Mammary epithelial cell (primary cell): ENCODE measurements at regions of chr3 and their contacts with region 1.

Region 1: DNA sequence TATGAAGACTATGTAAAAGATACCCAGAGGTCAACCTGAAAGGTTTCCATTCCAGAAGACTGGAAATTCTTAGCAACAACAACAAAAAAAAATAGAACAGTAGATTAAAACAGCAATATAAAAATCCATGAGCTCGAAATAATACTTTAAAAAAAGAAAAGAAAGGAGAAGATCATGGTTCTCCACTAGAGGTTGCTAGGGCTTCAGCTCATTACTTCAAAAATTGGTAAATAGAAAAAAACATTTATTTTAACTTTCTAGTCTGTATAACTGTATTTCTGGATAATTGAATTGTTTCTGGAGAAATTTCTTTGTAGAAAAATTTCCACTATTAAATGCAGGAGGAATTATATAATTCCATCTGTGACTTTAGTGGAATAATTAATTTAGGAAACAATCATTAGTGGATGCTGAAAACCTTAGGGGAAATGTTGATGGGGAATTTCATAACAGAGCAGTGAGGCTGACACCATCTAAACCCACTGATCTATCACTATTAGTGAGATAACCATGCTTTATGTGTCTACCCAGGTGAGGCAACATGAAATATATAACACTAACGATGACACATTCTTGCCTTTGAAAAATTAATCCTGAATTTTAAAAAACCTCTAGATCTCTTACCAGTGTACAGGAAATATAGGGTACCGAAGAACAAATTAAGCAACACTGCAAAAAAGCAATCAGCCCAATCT is 62.5 kb upstream of the SNRK start:
- DNase-seq: no peak
- H3K4me3 ChIP-seq: no peak overlapping the region
- H3K27ac ChIP-seq: no peak overlapping the region
- H3K4me1 ChIP-seq: no peaks in the 10 kb centered on the region
- H3K27me3 ChIP-seq: peaks cover 2% of the 10 kb centered on the region
- CTCF ChIP-seq: peak; percentile 30 to 52

Region 2: GRCh38 chr3:42957573-42957972 is 266.2 kb before region 1 on chr3:
- CTCF ChIA-PET with region 1: no interaction called
- dilution Hi-C with region 1: no loop called
- in situ Hi-C with region 1: no loop called
- intact Hi-C with region 1: no loop called
- DNase-seq: no peak
- H3K4me3 ChIP-seq: no peak overlapping the region
- H3K27ac ChIP-seq: no peak overlapping the region
- H3K4me1 ChIP-seq: no peaks in the 10 kb centered on the region
- H3K27me3 ChIP-seq: peaks cover 2% of the 10 kb centered on the region
- CTCF ChIP-seq: peak in 1 of 2 donors; percentile 19

Region 3: GRCh38 chr3:43378066-43378935 is 154.5 kb after region 1 on chr3:
- CTCF ChIA-PET with region 1: interaction called, 6 read pairs
- dilution Hi-C with region 1: no loop called
- in situ Hi-C with region 1: loop called in 1 of 2 experiments (anchors 10 kb)
- intact Hi-C with region 1: loop called (anchors 1 kb)
- DNase-seq: peak; percentile 43
- H3K4me3 ChIP-seq: no peak overlapping the region
- H3K27ac ChIP-seq: no peak overlapping the region
- H3K4me1 ChIP-seq: no peaks in the 10 kb centered on the region
- H3K27me3 ChIP-seq: no peaks in the 10 kb centered on the region
- CTCF ChIP-seq: peak; percentile 86 to 87

Region 4: GRCh38 chr3:43503067-43503728 is 279.4 kb after region 1 on chr3:
- CTCF ChIA-PET with region 1: no interaction called
- dilution Hi-C with region 1: no loop called
- in situ Hi-C with region 1: no loop called
- intact Hi-C with region 1: loop called (anchors 1 kb)
- DNase-seq: no peak
- H3K4me3 ChIP-seq: no peak overlapping the region
- H3K27ac ChIP-seq: no peak overlapping the region
- H3K4me1 ChIP-seq: peaks cover 3% of the 10 kb centered on the region
- H3K27me3 ChIP-seq: no peaks in the 10 kb centered on the region
- CTCF ChIP-seq: peak; percentile 45 to 48

Region 5: GRCh38 chr3:43855674-43856299 is 632.0 kb after region 1 on chr3:
- CTCF ChIA-PET with region 1: interaction called, 24 read pairs
- dilution Hi-C with region 1: no loop called
- in situ Hi-C with region 1: no loop called
- intact Hi-C with region 1: no loop called
- DNase-seq: peak; percentile 49
- H3K4me3 ChIP-seq: no peak overlapping the region
- H3K27ac ChIP-seq: no peak overlapping the region
- H3K4me1 ChIP-seq: peaks cover 19% of the 10 kb centered on the region
- H3K27me3 ChIP-seq: no peaks in the 10 kb centered on the region
- CTCF ChIP-seq: peak; percentile 60 to 87